ENCODE measurements at regions of chrX and their contacts with region 1.

Region 1: DNA sequence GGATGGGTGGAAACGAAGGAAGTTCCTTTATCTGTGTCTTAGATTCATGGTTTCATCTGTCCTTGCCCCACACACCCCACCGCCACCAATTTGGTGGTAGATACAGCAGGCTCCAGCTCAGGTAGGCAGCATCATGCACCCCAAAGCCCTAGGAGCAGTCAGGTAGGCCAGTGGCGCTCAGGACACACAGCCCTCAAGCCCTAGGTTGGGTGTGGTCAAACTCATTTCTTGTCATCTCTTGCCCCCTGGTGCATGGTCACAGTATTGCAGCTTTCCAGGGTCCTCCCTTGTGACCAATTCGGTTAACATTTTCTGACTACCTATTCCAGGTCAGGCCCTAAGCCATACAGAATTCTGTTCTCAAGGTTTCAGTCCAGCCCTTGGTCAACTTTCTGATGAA is 14.5 kb upstream of the PRRG3 start:
- DNase-seq: peak; percentile 12
- ATAC-seq: peak; percentile 99
- H3K4me3 ChIP-seq: no peak overlapping the region
- H3K27ac ChIP-seq: no peak overlapping the region
- H3K4me1 ChIP-seq: no peaks in the 10 kb centered on the region
- H3K27me3 ChIP-seq: 0 out of 4 replicates have a peak, but pooled peaks cover 0 to 2% of the 10 kb centered on the region in 2 experiments
- CTCF ChIP-seq: peak; percentile 73 to 83 (median 80)
- EP300 ChIP-seq: no peak
- POLR2A ChIP-seq: no peak
- RAD21 ChIP-seq: peak; percentile 92

Region 2: DNA sequence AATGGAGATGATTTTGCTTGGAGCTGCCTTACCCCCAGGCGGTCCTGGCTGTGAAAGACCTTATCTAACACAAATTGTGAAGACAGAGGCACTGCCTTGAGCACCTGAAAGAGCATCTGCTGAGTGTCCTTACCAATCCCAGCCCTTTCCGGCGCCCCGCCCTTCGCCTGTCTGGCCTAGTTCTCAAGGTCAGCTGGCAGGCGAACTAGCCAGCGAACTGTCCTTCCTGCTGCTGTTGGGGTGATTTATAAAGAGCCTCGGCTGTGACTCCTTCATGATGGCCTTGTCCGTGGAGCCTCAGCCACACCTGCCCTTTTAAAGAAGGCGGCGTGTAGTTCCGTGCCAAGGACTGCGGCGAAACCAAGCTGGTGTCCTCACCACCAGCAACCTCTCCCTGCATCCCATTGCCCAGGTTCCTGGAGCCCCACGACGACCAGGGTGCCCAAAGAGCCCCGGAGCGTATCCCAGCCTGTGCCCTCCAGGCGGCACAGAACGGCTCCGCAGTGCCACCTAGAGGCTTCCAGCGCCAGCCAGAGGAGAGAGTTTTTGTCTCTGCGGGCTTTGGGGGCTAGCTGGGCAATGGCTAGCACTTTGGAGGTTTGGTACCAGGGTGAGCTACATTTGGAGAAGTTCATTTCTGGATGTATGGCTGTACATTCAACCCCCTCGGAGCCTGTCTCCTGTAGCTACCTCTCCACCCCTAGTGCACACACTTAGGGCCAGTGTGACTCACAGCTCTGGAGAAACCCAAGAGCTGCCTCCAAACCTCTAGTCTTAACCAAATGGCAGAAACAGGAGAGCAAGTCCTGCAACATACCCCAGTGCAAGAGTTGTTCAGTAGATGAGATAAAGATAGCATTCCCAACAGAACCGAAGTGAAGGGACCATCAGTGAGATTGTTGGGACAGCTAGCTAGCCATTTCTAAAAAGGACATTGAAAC is 320.6 kb before region 1 on chrX:
- CTCF ChIA-PET with region 1: interaction called, 4 read pairs
- POLR2A ChIA-PET with region 1: no interaction called
- RAD21 ChIA-PET with region 1: no interaction called
- SMC1A ChIA-PET with region 1: no interaction called
- in situ Hi-C with region 1: no loop called
- intact Hi-C with region 1: loop called (anchors 10 kb)
- DNase-seq: no peak
- ATAC-seq: peak; percentile 97
- H3K4me3 ChIP-seq: no peak overlapping the region
- H3K27ac ChIP-seq: no peak overlapping the region
- H3K4me1 ChIP-seq: no peaks in the 10 kb centered on the region
- H3K27me3 ChIP-seq: no peaks in the 10 kb centered on the region
- CTCF ChIP-seq: peak; percentile 59 to 80 (median 73)
- EP300 ChIP-seq: no peak
- POLR2A ChIP-seq: no peak
- RAD21 ChIP-seq: peak; percentile 51

Region 3: GRCh38 chrX:151505796-151506195 is 175.0 kb before region 1 on chrX:
- CTCF ChIA-PET with region 1: interaction called, 7 read pairs
- POLR2A ChIA-PET with region 1: no interaction called
- RAD21 ChIA-PET with region 1: interaction called, 11 read pairs
- SMC1A ChIA-PET with region 1: no interaction called
- in situ Hi-C with region 1: no loop called
- intact Hi-C with region 1: loop called (anchors 2 kb)
- DNase-seq: no peak
- ATAC-seq: peak; percentile 85
- H3K4me3 ChIP-seq: no peak overlapping the region
- H3K27ac ChIP-seq: no peak overlapping the region
- H3K4me1 ChIP-seq: no peaks in the 10 kb centered on the region
- H3K27me3 ChIP-seq: no peaks in the 10 kb centered on the region
- CTCF ChIP-seq: peak; percentile 46 to 50 (median 49)
- EP300 ChIP-seq: no peak
- POLR2A ChIP-seq: no peak
- RAD21 ChIP-seq: peak; percentile 63

Region 4: GRCh38 chrX:151780621-151781020 is 99.8 kb after region 1 on chrX:
- CTCF ChIA-PET with region 1: no interaction called
- POLR2A ChIA-PET with region 1: no interaction called
- RAD21 ChIA-PET with region 1: no interaction called
- SMC1A ChIA-PET with region 1: no interaction called
- in situ Hi-C with region 1: no loop called
- intact Hi-C with region 1: no loop called
- DNase-seq: no peak
- ATAC-seq: no peak
- H3K4me3 ChIP-seq: no peak overlapping the region
- H3K27ac ChIP-seq: no peak overlapping the region
- H3K4me1 ChIP-seq: no peaks in the 10 kb centered on the region
- H3K27me3 ChIP-seq: no peaks in the 10 kb centered on the region; a peak in 2 of 4 replicates
- CTCF ChIP-seq: no peak
- EP300 ChIP-seq: no peak
- POLR2A ChIP-seq: no peak
- RAD21 ChIP-seq: no peak

Region 5: DNA sequence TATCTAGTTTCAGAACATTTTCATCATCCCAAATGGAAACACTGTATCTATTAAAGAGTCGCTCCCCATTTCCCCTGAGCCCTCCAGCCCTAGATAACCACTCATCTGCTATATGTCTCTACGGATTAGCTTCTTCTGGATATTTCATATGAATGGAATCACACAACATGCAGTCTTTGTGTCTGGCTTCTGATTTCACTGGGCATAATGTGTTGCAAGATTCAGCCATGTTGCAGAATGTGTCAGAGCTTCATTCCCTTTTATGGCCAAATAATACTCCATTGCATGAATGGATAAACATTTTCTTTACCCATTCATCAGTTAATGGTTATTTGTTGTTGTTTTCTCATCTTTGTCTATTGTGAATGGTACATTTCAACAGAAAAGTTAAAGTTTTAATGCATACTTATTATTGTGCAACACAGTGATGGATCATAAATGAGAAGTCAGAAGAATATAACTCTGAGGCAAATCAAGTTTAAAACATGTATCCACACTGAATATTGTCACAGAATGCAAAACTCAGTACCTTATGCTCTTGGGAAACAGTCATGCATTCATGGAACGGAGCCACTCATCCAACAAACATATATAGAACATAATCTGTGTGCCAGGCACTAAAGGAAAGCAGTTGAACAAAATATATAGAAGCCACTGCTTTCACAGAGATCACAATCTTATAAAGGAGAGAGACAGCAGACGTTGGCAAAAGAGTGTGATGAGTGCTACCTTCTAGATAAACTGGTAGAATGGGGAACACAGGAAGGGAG is 174.1 kb after region 1 on chrX:
- CTCF ChIA-PET with region 1: no interaction called
- POLR2A ChIA-PET with region 1: no interaction called
- RAD21 ChIA-PET with region 1: no interaction called
- SMC1A ChIA-PET with region 1: no interaction called
- in situ Hi-C with region 1: no loop called
- intact Hi-C with region 1: no loop called
- DNase-seq: no peak
- ATAC-seq: no peak
- H3K4me3 ChIP-seq: no peak overlapping the region
- H3K27ac ChIP-seq: no peak overlapping the region
- H3K4me1 ChIP-seq: no peaks in the 10 kb centered on the region
- H3K27me3 ChIP-seq: no peaks in the 10 kb centered on the region
- CTCF ChIP-seq: no peak
- EP300 ChIP-seq: no peak
- POLR2A ChIP-seq: no peak
- RAD21 ChIP-seq: no peak

Measured in GM12878 (cell line).